Gastrocnemius medialis (tissue), 4 donors: ENCODE measurements at regions of chr5 and their contacts with region 1.

Region 1: DNA sequence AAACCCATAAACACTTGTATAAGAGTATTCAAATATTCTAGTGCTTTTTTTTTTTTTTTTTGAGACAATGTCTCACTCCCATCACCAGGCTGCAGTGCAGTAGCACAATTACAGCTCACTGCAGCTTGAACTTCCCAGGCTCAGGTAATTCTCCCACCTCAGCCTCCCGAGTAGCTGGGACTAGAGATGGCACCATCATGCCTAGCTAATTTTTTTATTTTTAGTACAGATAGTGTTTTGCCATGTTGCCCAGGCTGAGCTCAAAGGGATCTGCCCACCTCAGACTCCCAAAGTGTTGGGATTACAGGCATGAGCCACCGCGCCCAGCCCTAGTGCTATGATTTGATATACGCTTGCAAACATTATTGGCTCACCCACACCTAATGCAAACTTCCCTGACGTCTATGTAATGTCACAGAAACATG is 11.8 kb downstream of the IL6ST start:
- DNase-seq: no peak
- ATAC-seq: no peak
- H3K4me3 ChIP-seq: no peak overlapping the region
- H3K27ac ChIP-seq: peak overlapping the region; percentile 2 to 52 (median 46)
- H3K4me1 ChIP-seq: peaks cover 37 to 38% of the 10 kb centered on the region in 2 donors
- H3K27me3 ChIP-seq: no peaks in the 10 kb centered on the region
- CTCF ChIP-seq: peak in 1 of 5 experiments; percentile 28
- POLR2A ChIP-seq: no peak

Region 2: DNA sequence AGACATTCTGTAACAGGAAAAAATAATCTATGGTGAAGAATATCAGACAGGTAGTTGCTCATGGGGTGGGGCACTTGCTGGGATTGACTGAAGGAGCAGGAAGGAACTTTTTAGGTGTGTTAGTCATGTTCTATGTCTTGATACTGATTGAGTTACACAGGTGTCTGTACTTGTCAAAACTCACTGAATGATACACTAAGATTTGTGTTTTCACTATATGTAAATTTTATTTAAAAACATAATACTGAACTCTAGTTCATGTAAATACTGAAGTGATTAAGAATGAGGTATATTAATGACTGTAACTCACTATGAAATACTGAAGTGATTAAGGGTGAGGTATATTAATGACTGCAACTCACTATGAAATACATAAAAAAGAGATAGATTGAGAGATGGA is 16.7 kb before region 1 on chr5:
- in situ Hi-C with region 1: no loop called
- intact Hi-C with region 1: no loop called
- DNase-seq: no peak
- ATAC-seq: peak in 1 of 2 donors; percentile 44
- H3K4me3 ChIP-seq: no peak overlapping the region
- H3K27ac ChIP-seq: no peak overlapping the region
- H3K4me1 ChIP-seq: peaks cover 0 to 3% of the 10 kb centered on the region in 2 donors
- H3K27me3 ChIP-seq: no peaks in the 10 kb centered on the region
- CTCF ChIP-seq: no peak
- POLR2A ChIP-seq: no peak

Region 3: GRCh38 chr5:56050551-56051255 is 67.7 kb after region 1 on chr5:
- in situ Hi-C with region 1: no loop called
- intact Hi-C with region 1: no loop called
- DNase-seq: no peak
- ATAC-seq: peak; percentile 60
- H3K4me3 ChIP-seq: no peak overlapping the region
- H3K27ac ChIP-seq: peak overlapping the region in 3 of 4 donors; percentile 10 to 64 (median 23)
- H3K4me1 ChIP-seq: no peaks in the 10 kb centered on the region
- H3K27me3 ChIP-seq: no peaks in the 10 kb centered on the region
- CTCF ChIP-seq: no peak
- POLR2A ChIP-seq: no peak

Region 4: DNA sequence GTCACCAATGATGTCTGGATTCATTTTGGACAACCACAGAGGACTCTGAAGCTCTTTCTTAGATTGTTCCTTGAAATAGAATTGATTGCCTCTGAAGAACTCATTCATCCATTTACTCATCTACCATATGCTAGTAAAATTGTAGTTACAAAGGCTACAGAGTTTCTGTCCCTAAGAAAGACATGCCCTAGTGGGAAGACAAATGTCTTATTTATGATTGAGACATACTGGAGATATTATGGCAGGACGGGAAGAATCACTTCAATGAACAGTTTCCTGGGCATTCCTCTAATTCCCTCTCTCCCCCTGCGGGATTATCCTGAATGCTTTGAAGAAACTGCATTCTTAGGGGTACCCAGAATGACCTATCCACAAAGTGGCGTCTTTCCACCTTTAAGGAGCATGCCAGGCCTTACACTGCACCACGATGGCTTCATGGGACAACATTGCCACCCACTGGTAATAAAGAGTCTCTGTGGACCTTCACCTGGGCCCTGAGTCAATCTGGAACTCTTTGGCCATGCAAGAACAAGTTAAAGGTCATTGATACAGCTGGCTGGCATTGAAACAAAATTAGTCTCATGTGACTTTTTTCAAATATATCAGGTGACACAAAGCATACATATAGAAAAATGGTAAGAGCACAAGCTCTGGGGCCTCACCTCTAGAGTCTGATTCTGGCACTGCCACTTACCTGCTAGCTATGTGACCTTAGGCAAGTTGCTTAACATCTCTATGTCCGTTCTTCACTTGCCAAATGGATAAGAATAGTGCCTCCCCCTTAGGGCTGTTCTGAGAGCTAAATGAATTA is 218.1 kb after region 1 on chr5:
- in situ Hi-C with region 1: loop called in 2 of 4 experiments (anchors 5 to 25 kb)
- intact Hi-C with region 1: loop called (anchors 1 kb)
- DNase-seq: peak; percentile 29 to 40
- ATAC-seq: peak; percentile 96
- H3K4me3 ChIP-seq: no peak overlapping the region
- H3K27ac ChIP-seq: no peak overlapping the region
- H3K4me1 ChIP-seq: no peaks in the 10 kb centered on the region
- H3K27me3 ChIP-seq: no peaks in the 10 kb centered on the region
- CTCF ChIP-seq: peak; percentile 61 to 80 (median 76)
- POLR2A ChIP-seq: no peak

Region 5: DNA sequence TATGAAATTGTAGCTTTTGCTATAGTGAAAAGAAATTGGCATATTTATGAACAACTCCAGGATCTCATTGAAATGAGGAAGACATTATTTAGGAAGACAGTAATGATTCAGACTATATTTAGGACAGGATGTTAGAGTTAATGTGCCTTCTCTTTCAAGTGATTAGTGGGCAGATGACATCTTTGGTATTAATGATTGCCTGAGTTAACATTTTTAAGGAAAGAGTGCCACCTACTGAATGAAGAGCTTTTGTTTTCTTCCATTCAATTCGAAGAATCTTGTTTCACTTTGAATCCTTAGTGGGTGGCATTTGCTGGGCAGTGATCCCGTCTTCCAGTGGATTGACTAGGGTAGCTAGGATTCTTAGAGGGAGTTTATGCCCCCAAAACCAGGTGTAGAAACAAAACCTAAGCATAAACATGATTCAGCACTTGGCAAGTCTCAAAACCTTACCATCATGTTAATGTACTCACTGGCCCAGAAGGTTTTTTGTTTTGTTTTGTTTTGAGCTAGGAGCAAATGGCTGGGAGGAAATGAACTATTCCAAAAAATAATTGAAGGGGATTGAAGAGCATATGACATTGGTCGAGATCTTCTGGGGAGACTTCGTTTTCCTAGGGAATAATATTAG is 855.6 kb after region 1 on chr5:
- in situ Hi-C with region 1: no loop called
- intact Hi-C with region 1: loop called (anchors 5 kb)
- DNase-seq: no peak
- ATAC-seq: peak; percentile 63 to 83
- H3K4me3 ChIP-seq: peak overlapping the region in 3 of 4 donors; percentile 24 to 36 (median 33)
- H3K27ac ChIP-seq: peak overlapping the region; percentile 35 to 53 (median 45)
- H3K4me1 ChIP-seq: peaks cover 30 to 50% of the 10 kb centered on the region in 2 donors
- H3K27me3 ChIP-seq: no peaks in the 10 kb centered on the region
- CTCF ChIP-seq: peak; percentile 43 to 71 (median 58)
- POLR2A ChIP-seq: no peak